ENCODE measurements at regions of chr1 and their contacts with region 1.

Region 1: DNA sequence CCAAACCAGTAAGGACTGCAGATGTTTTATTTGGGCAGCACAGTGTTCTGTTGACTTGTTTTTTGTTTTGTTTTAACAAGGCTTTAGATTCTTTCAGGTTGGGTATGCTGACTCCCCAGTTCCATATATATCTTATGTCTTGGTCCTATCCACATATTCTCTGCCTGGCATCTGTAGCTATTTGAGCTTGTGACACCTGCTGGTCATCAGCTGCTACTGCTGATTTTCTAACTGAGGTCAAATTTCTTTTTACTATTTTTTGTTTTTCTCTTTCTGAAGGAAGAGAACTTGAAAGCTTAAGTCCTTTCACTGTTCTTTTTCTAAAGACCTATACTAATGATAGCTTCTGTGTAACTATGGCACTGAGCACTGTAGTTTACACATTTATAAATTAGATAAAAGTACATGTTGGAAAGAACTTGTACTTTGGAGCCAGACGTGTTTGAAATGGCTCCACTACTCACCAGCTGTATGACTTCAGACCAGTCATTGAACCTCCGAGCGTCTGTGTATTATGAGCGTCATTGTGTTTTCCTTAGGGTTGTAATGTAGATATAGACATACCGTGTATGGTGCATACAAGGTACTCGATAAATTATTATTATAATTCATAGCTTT is 109.4 kb downstream of the NRDC start:
- DNase-seq: peak; percentile 80
- ATAC-seq: peak; percentile 97
- H3K4me3 ChIP-seq: no peak overlapping the region
- H3K27ac ChIP-seq: no peak overlapping the region
- H3K4me1 ChIP-seq: no peaks in the 10 kb centered on the region; the same call in 1 of the 2 replicates
- H3K27me3 ChIP-seq: no peaks in the 10 kb centered on the region
- CTCF ChIP-seq: peak; percentile 78
- POLR2A ChIP-seq: no peak
- RAD21 ChIP-seq: peak; percentile 80

Region 2: GRCh38 chr1:51627678-51628077 is 141.4 kb before region 1 on chr1:
- CTCF ChIA-PET with region 1: interaction called, 7 read pairs
- POLR2A ChIA-PET with region 1: no interaction called
- dilution Hi-C with region 1: no loop called
- in situ Hi-C with region 1: loop called (anchors 5 kb)
- intact Hi-C with region 1: loop called (anchors 1 kb)
- DNase-seq: peak; percentile 67
- ATAC-seq: peak; percentile 55; the same call in 1 of the 2 replicates
- H3K4me3 ChIP-seq: no peak overlapping the region
- H3K27ac ChIP-seq: no peak overlapping the region
- H3K4me1 ChIP-seq: peaks cover 5% of the 10 kb centered on the region
- H3K27me3 ChIP-seq: no peaks in the 10 kb centered on the region
- CTCF ChIP-seq: peak; percentile 66
- POLR2A ChIP-seq: no peak
- RAD21 ChIP-seq: peak; percentile 86

Region 3: DNA sequence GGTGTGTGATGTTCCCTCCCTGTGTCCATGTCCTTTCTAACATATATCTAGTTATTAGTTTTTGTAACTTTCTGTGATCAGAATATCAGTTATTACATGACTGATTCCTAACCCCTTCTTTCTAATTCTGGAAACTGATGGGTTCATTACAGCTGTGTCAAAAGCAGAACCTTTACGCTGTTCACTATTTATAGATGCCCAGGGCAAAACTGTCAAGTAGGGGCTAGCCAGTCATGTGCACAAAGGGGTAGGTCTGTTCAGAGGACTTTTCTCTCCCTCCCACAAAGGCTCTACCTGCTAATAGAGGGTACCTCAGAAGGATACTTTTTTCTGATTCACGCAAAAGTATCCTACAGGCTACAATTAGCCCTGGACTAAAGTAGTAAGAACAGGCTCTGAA is 30.3 kb after region 1 on chr1:
- CTCF ChIA-PET with region 1: no interaction called
- POLR2A ChIA-PET with region 1: no interaction called
- dilution Hi-C with region 1: no loop called
- in situ Hi-C with region 1: no loop called
- intact Hi-C with region 1: no loop called
- DNase-seq: no peak
- ATAC-seq: no peak
- H3K4me3 ChIP-seq: no peak overlapping the region
- H3K27ac ChIP-seq: no peak overlapping the region
- H3K4me1 ChIP-seq: no peaks in the 10 kb centered on the region
- H3K27me3 ChIP-seq: no peaks in the 10 kb centered on the region
- CTCF ChIP-seq: no peak
- POLR2A ChIP-seq: no peak
- RAD21 ChIP-seq: no peak

Measured in IMR-90 (cell line).